AG04450 (cell line): ENCODE measurements at regions of chr22 and their contacts with region 1.

Region 1: DNA sequence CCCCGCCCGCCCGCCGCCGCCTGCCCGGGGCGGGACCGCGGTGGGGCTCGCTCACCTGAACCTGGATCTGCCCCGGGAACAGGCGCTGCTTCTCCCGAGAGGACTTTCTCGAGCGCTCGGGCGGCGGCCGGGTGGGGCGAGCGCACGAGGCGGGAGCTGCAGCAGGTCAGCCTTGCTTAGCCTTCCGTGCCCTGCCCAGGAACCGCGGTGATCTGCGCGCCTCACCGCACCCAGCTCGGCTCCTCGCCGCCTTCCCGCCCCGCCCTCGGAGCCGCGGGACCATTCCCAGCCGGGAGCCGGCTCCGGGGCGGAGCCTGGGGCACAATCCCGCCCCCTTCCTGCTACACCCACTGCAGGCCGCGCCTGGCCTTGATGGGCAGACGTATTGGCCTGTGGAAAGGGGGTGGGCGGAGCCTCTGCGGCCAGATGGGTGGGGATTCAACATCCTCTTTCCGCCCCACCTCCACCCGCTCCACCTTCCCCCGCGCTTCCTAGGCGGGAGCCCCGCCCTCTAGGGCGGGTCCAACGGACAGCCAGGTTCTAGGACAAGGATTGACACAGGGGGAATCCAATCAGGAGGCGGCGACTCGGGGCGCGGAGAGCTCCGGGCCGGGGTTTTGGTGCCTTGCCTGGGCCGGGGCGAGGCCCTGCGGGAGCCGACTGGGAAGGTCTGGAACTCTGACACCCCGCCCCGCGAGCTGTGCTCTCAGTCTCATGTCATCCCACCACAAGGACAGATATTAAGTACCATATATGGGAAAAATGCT is at the start of gene MYH9:
- DNase-seq: peak; percentile 100
- H3K4me3 ChIP-seq: peak within 1 kb of the TSS; percentile 96
- H3K27ac ChIP-seq: peak within 1 kb of the TSS; percentile 85
- H3K27me3 ChIP-seq: no peaks in the 10 kb centered on the region
- CTCF ChIP-seq: no peak
- polyA plus RNA-seq, gene MYH9: 338 and 432 TPM in 2 replicates

Region 2: GRCh38 chr22:36197065-36197440 is 190.9 kb before region 1 on chr22:
- CTCF ChIA-PET with region 1: no interaction called
- POLR2A ChIA-PET with region 1: no interaction called
- DNase-seq: no peak
- H3K4me3 ChIP-seq: no peak overlapping the region
- H3K27ac ChIP-seq: no peak overlapping the region
- H3K27me3 ChIP-seq: peaks cover 12% of the 10 kb centered on the region
- CTCF ChIP-seq: no peak

Region 3: DNA sequence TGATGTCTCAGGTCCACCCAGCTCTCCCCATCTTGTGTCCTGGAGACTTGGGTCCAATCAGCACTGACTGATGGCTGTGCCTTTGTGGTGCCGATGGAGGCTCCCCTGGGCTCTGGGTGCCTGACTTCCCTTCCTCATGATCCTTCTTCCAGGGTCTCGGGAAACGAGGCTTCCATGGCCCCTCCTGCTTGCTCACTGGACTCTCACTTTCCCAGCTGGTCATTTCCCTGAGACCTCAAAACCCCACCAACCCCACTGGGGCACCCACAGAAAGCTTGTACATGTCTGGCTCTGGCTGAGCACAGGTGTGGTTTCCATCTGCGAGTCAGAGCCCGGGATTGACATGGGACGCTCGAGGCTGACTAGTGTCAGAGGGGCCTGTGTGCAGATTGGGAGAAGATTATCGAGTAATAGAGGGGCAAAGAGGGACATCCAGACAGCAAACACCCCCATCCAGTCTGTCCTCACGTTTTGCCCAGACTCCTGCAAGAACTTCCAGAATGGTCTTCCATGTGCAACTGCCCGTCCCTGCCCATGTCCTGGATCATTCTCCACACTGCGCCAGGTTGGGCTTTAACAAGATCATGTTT is 119.9 kb before region 1 on chr22:
- CTCF ChIA-PET with region 1: no interaction called
- POLR2A ChIA-PET with region 1: no interaction called
- DNase-seq: no peak
- H3K4me3 ChIP-seq: no peak overlapping the region
- H3K27ac ChIP-seq: no peak overlapping the region
- H3K27me3 ChIP-seq: no peaks in the 10 kb centered on the region
- CTCF ChIP-seq: no peak

Region 4: DNA sequence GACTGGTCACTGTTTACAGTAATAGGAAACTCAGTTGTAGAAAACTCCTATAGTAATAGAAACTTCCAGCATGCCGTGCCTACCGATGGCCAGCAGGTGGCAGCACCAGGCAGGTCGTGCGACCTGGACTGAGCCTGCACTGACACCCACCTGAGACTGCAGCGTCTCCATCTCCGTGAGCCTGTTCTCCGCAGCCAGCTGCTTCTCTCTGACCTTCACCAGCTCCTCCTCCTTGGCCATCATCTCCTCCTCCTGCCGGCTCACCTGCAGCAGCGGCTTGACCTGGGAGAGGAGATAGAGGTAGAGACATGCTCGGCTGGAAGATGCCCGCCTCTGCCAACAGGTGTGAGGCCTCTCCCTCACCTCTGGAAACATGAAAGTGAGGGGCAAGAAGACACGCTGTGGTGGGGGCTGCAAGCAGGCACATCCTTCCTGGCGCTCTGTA is 86.5 kb before region 1 on chr22:
- CTCF ChIA-PET with region 1: interaction called, 5 read pairs
- POLR2A ChIA-PET with region 1: interaction called, 11 read pairs
- DNase-seq: peak; percentile 33
- H3K4me3 ChIP-seq: peak overlapping the region; percentile 18
- H3K27ac ChIP-seq: peak overlapping the region; percentile 99
- H3K27me3 ChIP-seq: no peaks in the 10 kb centered on the region
- CTCF ChIP-seq: peak; percentile 91

Region 5: DNA sequence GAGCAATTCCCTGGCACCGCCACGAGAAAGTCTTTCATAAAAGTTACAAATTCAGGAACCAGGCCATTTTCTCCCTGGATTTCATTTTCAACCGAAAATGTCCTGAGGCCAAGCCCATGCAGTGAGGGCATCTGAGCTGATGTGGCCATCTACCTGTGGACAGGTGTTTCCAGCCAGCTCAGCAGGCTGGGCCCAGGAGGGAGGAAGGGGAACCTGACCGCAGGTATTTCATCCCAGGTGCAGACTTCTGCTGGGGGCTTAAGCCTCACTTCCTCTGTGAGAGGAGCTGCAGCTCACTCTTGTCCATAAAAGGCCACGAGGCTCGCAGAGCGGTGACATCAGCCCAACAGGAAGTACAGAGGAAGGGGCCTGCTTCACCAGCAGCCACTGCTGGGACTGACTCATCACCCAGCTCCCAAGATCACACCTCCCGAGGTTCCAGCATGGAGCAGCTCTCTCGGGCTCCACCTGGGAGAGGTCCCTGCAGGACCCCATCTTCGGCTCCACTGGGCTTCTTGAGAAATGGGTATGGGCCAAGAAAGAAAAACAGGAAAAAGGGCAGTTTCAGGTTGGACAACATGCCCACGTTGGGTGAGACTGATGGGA is 56.5 kb before region 1 on chr22:
- CTCF ChIA-PET with region 1: no interaction called
- POLR2A ChIA-PET with region 1: interaction called, 13 read pairs
- DNase-seq: peak; percentile 89
- H3K4me3 ChIP-seq: no peak overlapping the region
- H3K27ac ChIP-seq: peak overlapping the region; percentile 100
- H3K27me3 ChIP-seq: no peaks in the 10 kb centered on the region
- CTCF ChIP-seq: no peak

Region 6: GRCh38 chr22:36419177-36419911 is 31.4 kb after region 1 on chr22:
- CTCF ChIA-PET with region 1: interaction called, 5 read pairs
- POLR2A ChIA-PET with region 1: interaction called, 15 read pairs
- DNase-seq: peak; percentile 91
- H3K4me3 ChIP-seq: peak overlapping the region; percentile 17; the same call in 1 of the 2 replicates
- H3K27ac ChIP-seq: peak overlapping the region; percentile 87
- H3K27me3 ChIP-seq: no peaks in the 10 kb centered on the region
- CTCF ChIP-seq: no peak

Region 7: GRCh38 chr22:36439481-36440271 is 51.7 kb after region 1 on chr22:
- CTCF ChIA-PET with region 1: no interaction called
- POLR2A ChIA-PET with region 1: interaction called, 20 read pairs
- DNase-seq: peak; percentile 88
- H3K4me3 ChIP-seq: no peak overlapping the region
- H3K27ac ChIP-seq: peak overlapping the region; percentile 83
- H3K27me3 ChIP-seq: no peaks in the 10 kb centered on the region
- CTCF ChIP-seq: no peak

Region 8: DNA sequence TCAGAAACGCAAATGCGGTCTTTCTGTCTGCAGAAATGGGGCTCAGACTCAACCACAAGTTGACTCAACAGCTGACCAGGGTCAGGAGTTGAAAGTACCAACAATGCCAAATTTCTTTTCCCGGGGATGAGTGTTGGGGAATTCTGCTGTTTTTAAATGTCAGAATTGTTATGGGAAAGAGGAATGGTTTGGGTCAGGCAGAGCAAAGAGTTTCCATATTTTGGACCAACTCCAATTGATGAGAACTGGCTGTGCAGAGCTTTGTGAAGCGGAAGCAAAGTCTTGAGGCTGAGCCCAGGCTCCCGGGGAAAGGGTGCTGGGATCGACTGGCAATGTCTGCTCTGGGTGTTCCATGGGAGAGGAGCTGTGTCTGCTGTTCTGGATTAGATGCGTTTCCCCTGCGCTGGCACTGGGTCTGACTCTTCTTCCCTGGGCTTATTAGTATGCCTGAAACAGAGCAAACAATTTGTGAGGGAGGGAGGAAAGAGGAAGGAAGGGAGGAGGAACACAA is 57.3 kb after region 1 on chr22:
- CTCF ChIA-PET with region 1: no interaction called
- POLR2A ChIA-PET with region 1: interaction called, 20 read pairs
- DNase-seq: peak; percentile 94
- H3K4me3 ChIP-seq: no peak overlapping the region
- H3K27ac ChIP-seq: peak overlapping the region; percentile 92
- H3K27me3 ChIP-seq: no peaks in the 10 kb centered on the region
- CTCF ChIP-seq: no peak

Region 9: GRCh38 chr22:36461669-36462649 is 74.0 kb after region 1 on chr22:
- CTCF ChIA-PET with region 1: no interaction called
- POLR2A ChIA-PET with region 1: interaction called, 88 read pairs
- DNase-seq: peak; percentile 93
- H3K4me3 ChIP-seq: no peak overlapping the region
- H3K27ac ChIP-seq: peak overlapping the region; percentile 89
- H3K27me3 ChIP-seq: no peaks in the 10 kb centered on the region
- CTCF ChIP-seq: no peak